Naive thymus-derived CD4-positive, alpha-beta T cell (primary cell): ENCODE measurements at regions of chr14 and their contacts with region 1.

Region 1: DNA sequence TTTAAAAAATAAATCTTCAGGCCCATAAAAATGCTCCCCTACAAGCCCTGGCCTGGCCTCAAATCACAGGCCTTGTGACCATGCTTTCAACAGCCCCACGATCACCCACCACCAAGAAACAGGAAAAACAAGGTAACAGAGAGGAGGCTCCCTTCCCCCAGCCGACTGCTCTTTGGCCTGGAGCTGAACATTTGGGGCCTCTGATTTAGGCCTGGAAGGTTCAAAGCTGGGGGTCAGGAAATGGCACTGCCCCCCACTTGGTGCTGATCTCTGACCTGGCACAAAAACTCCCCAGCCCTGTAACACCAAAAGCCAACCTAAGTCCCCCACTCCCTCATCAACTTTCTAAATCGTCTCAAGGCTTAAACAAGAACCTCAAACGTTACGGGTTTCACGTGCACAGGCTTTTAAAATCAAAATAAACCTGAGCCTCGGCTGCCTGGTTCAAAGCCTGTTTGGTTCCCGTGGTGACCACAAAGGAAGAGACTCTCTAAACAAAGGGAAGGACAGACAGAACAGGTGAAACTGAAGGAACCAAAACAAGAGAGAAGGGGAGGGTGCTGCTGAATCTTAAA is 9.0 kb downstream of the ACTN1 start:
- DNase-seq: peak in 7 of 9 donors; percentile 81 to 94 (median 91)
- ATAC-seq: peak; percentile 77
- H3K4me3 ChIP-seq: peak overlapping the region; percentile 46
- H3K4me3 Mint-ChIP-seq: peak overlapping the region; percentile 43 to 96 (median 90)
- H3K27ac ChIP-seq: peak overlapping the region; percentile 89
- H3K27ac Mint-ChIP-seq: peak overlapping the region; percentile 85 to 100 (median 99)
- H3K4me1 ChIP-seq: peaks cover 27 to 79% of the 10 kb centered on the region in 2 donors
- H3K4me1 Mint-ChIP-seq: peaks cover 57 to 100% (median 90%) of the 10 kb centered on the region in 7 donors
- H3K27me3 ChIP-seq: no peaks in the 10 kb centered on the region
- H3K27me3 Mint-ChIP-seq: no peaks in the 10 kb centered on the region

Region 2: DNA sequence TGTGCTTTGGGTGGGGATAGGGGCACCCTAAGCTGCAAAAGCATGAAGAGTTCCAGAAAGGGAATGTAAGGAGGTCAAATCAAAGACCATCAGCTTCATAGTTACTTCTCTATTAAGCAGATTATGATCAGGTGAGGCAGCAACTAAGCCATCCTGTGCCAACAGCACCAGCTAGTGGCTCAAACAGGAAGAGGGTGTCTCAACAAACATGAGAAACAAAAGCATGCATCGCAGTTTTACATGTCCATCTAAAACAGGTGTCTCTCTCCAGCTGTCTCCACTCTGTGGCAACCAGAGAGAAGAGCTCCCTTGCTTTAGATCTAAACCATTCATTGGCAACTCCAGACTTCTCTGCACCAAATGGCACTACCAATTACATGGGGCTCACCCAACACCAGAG is 43.9 kb before region 1 on chr14:
- CTCF ChIA-PET with region 1: interaction called, 7 read pairs
- POLR2A ChIA-PET with region 1: interaction called, 40 read pairs
- intact Hi-C with region 1: no loop called
- DNase-seq: peak in 3 of 9 donors; percentile 22 to 30 (median 29)
- ATAC-seq: no peak
- H3K4me3 ChIP-seq: no peak overlapping the region
- H3K4me3 Mint-ChIP-seq: peak overlapping the region in 4 of 10 donors; percentile 15 to 82 (median 30)
- H3K27ac ChIP-seq: no peak overlapping the region
- H3K27ac Mint-ChIP-seq: peak overlapping the region in 8 of 9 donors; percentile 86 to 97 (median 90)
- H3K4me1 ChIP-seq: peaks cover 0 to 72% of the 10 kb centered on the region in 2 donors
- H3K4me1 Mint-ChIP-seq: peaks cover 40 to 96% (median 87%) of the 10 kb centered on the region in 7 donors
- H3K27me3 ChIP-seq: no peaks in the 10 kb centered on the region
- H3K27me3 Mint-ChIP-seq: no peaks in the 10 kb centered on the region

Region 3: DNA sequence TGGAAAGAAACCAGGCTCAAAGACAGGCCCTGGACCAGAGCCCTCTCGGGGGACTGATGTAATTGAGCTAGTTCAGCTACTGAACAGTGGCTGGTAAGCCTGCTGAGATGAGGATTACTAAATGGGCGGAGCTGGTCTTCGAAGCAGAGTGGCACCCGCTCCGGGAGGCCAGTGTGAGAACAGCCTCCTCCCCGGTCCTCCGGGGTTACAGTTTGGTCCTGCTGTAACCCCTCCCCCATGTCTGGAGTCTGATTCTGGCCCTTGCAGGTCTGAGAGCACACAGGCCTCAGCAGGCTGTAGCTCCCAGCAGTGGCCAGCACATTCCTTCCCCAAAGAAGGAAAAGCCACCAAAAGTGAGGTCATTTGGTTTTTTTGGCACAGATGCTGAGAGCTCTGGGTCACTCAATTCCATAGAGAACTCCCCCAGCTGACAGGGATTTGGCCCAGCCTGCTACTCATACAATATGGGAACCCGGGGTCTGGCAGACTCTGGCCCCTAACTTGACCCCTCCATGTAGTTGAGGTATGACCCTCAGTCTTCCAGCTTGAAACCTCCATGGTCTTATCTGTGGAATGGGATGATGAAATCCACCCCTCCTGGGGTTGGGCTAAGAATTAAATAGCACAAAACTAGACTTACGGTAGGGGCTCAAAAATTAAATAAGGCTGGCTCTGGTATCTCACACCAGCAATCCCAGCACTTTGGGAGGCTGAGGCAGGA is 30.1 kb before region 1 on chr14:
- CTCF ChIA-PET with region 1: no interaction called
- POLR2A ChIA-PET with region 1: interaction called, 13 read pairs
- intact Hi-C with region 1: loop called in 1 of 2 experiments (anchors 1 kb)
- DNase-seq: no peak
- ATAC-seq: no peak
- H3K4me3 ChIP-seq: no peak overlapping the region
- H3K4me3 Mint-ChIP-seq: peak overlapping the region in 6 of 10 donors; percentile 8 to 76 (median 32)
- H3K27ac ChIP-seq: peak overlapping the region; percentile 20
- H3K27ac Mint-ChIP-seq: peak overlapping the region in 8 of 9 donors; percentile 44 to 91 (median 85)
- H3K4me1 ChIP-seq: peaks cover 0 to 70% of the 10 kb centered on the region in 2 donors
- H3K4me1 Mint-ChIP-seq: peaks cover 15 to 99% (median 92%) of the 10 kb centered on the region in 7 donors
- H3K27me3 ChIP-seq: no peaks in the 10 kb centered on the region
- H3K27me3 Mint-ChIP-seq: no peaks in the 10 kb centered on the region